Activated T-helper 1 cell treated with anti-CD3 and anti-CD28 coated beads, Interleukin-12 subunit alpha, Interleukin-12 subunit beta, Interleukin-2, Interleukin-4 antibody, amounts not matched to agents 30 ng/mL and 10 ng/mL and 1 ng/mL, durations not matched to agents 14 hours and 24 hours and 36 hours (primary cell): ENCODE measurements at regions of chr4 and their contacts with region 1.

Region 1: DNA sequence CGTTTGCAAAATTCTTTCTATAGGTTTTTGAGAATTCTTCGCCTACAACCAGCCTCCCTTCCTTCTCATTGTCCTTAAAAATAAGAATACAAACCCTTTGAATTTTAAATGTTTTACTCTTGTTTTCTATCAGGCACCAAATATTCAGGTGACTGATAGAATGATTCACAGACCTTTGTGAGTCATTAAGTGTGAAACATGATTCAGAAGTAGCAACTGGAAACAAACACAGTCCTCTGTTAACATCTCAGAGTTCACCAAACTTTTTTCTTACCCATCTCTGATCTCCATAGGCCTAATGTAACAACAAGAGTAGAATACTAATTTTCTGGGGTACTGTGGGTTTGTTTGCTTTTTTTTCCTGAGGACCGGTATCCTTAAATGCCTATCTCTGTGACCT is 63.4 kb upstream of the MAB21L2 start:
- DNase-seq: no peak
- H3K4me3 Mint-ChIP-seq: no peak overlapping the region
- H3K27ac Mint-ChIP-seq: no peak overlapping the region
- H3K4me1 Mint-ChIP-seq: peaks cover 17% of the 10 kb centered on the region
- H3K27me3 Mint-ChIP-seq: no peaks in the 10 kb centered on the region

Region 2: GRCh38 chr4:150395872-150396271 is 122.7 kb before region 1 on chr4:
- intact Hi-C with region 1: loop called (anchors 1 kb)
- DNase-seq: no peak
- H3K4me3 Mint-ChIP-seq: no peak overlapping the region
- H3K27ac Mint-ChIP-seq: peak overlapping the region; percentile 87
- H3K4me1 Mint-ChIP-seq: peaks cover 15% of the 10 kb centered on the region
- H3K27me3 Mint-ChIP-seq: no peaks in the 10 kb centered on the region

Region 3: DNA sequence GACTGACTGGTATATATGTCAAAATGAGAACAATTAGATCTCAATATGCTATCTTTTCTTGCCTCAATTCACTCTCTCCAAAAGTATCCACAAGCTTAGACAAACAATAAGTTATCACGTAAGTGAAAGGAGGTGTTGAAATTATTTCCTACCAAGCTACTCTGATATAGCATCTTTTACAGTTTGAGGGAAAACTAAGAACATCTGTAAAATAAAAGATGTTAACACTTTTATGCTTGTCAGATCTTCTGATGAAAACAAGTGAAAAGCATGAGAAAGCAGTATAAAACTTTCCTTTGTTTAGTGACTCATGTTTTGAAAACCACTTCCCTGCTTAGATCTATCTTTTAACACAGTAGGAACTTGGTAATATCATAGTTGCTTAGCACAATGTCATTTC is 55.0 kb after region 1 on chr4:
- intact Hi-C with region 1: loop called (anchors 5 kb)
- DNase-seq: no peak
- H3K4me3 Mint-ChIP-seq: no peak overlapping the region
- H3K27ac Mint-ChIP-seq: no peak overlapping the region
- H3K4me1 Mint-ChIP-seq: peaks cover 6% of the 10 kb centered on the region
- H3K27me3 Mint-ChIP-seq: no peaks in the 10 kb centered on the region